ENCODE measurements at regions of chr5 and their contacts with region 1.

Region 1: GRCh38 chr5:113612060-113612496 is 98.6 kb downstream of the YTHDC2 start:
- DNase-seq: no peak
- ATAC-seq: peak; percentile 73
- H3K4me3 Mint-ChIP-seq: no peak overlapping the region
- H3K27ac Mint-ChIP-seq: no peak overlapping the region
- H3K4me1 Mint-ChIP-seq: peaks cover 23% of the 10 kb centered on the region
- H3K27me3 Mint-ChIP-seq: no peaks in the 10 kb centered on the region; the same call in 1 of the 2 replicates
- CTCF ChIP-seq: peak; percentile 53

Region 2: GRCh38 chr5:113663880-113664541 is 51.9 kb after region 1 on chr5:
- CTCF ChIA-PET with region 1: interaction called, 97 read pairs
- POLR2A ChIA-PET with region 1: no interaction called
- DNase-seq: peak; percentile 74
- ATAC-seq: peak; percentile 94
- H3K4me3 Mint-ChIP-seq: no peak overlapping the region
- H3K27ac Mint-ChIP-seq: 0 out of 2 replicates have a peak overlapping the region, but pooled peaks have one; percentile 15
- H3K4me1 Mint-ChIP-seq: peaks cover 6% of the 10 kb centered on the region
- H3K27me3 Mint-ChIP-seq: no peaks in the 10 kb centered on the region
- CTCF ChIP-seq: peak; percentile 30; the same call in 1 of the 2 replicates